ENCODE measurements at regions of chr16 and their contacts with region 1.

Region 1: GRCh38 chr16:88999457-89000206 is 22.6 kb upstream of the CBFA2T3 start:
- DNase-seq: no peak
- H3K4me3 ChIP-seq: no peak overlapping the region
- H3K4me3 Mint-ChIP-seq: no peak overlapping the region
- H3K27ac ChIP-seq: no peak overlapping the region
- H3K27ac Mint-ChIP-seq: peak overlapping the region in 1 of 7 donors; percentile 73
- H3K4me1 ChIP-seq: peaks cover 3 to 5% of the 10 kb centered on the region in 2 donors
- H3K4me1 Mint-ChIP-seq: peaks cover 17% of the 10 kb centered on the region
- H3K27me3 ChIP-seq: peaks cover 9 to 21% of the 10 kb centered on the region in 2 donors
- H3K27me3 Mint-ChIP-seq: peaks cover 19 to 40% (median 30%) of the 10 kb centered on the region in 3 donors
- CTCF ChIP-seq: no peak

Region 2: GRCh38 chr16:88303890-88304819 is 695.5 kb before region 1 on chr16:
- intact Hi-C with region 1: no loop called
- DNase-seq: no peak
- H3K4me3 ChIP-seq: no peak overlapping the region
- H3K4me3 Mint-ChIP-seq: no peak overlapping the region
- H3K27ac ChIP-seq: no peak overlapping the region
- H3K27ac Mint-ChIP-seq: no peak overlapping the region
- H3K4me1 ChIP-seq: no peaks in the 10 kb centered on the region
- H3K4me1 Mint-ChIP-seq: no peaks in the 10 kb centered on the region
- H3K27me3 ChIP-seq: no peaks in the 10 kb centered on the region
- H3K27me3 Mint-ChIP-seq: peaks cover 13 to 19% (median 15%) of the 10 kb centered on the region in 3 donors
- CTCF ChIP-seq: no peak

Region 3: DNA sequence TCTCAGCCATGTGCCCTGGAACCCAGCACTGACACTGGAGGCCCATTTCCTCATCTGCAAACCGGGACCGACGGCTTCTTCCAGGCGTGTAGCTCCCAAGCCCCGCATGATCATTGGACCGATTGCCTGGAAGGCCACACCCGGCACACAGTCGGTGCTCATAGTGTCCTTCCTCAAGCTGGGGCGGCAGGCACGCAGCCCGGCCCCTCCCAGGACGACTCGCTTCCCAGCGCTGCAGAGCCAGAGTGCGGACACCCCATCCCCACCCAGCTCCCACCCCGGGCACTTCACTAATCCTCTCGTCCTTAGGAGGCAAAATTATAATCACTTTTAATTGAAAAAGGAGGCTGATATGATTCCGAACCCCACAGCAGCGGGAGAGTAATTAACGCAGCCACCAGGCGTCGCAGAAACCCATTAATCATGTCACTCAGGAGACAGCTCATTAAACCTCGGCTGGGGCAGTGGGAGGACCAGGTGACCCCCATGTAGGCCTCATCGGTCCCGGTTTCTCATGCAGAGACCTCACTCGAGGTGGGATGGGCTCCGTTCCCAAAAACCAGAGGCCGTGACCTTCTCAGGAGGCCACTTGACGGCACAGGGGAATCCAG is 583.8 kb before region 1 on chr16:
- intact Hi-C with region 1: loop called in 1 of 2 experiments (anchors 5 kb)
- DNase-seq: no peak
- H3K4me3 ChIP-seq: no peak overlapping the region
- H3K4me3 Mint-ChIP-seq: no peak overlapping the region
- H3K27ac ChIP-seq: no peak overlapping the region
- H3K27ac Mint-ChIP-seq: peak overlapping the region in 2 of 7 donors; percentile 6 to 11
- H3K4me1 ChIP-seq: no peaks in the 10 kb centered on the region
- H3K4me1 Mint-ChIP-seq: no peaks in the 10 kb centered on the region
- H3K27me3 ChIP-seq: no peaks in the 10 kb centered on the region
- H3K27me3 Mint-ChIP-seq: peaks cover 0 to 6% (median 3%) of the 10 kb centered on the region in 3 donors
- CTCF ChIP-seq: no peak

Region 4: GRCh38 chr16:88983771-88984687 is 15.6 kb before region 1 on chr16:
- intact Hi-C with region 1: no loop called
- DNase-seq: no peak
- H3K4me3 ChIP-seq: no peak overlapping the region
- H3K4me3 Mint-ChIP-seq: peak overlapping the region in 1 of 2 donors; percentile 70
- H3K27ac ChIP-seq: no peak overlapping the region
- H3K27ac Mint-ChIP-seq: no peak overlapping the region
- H3K4me1 ChIP-seq: peaks cover 7 to 12% of the 10 kb centered on the region in 2 donors
- H3K4me1 Mint-ChIP-seq: peaks cover 24% of the 10 kb centered on the region
- H3K27me3 ChIP-seq: peaks cover 0 to 15% of the 10 kb centered on the region in 2 donors
- H3K27me3 Mint-ChIP-seq: peaks cover 26 to 50% (median 28%) of the 10 kb centered on the region in 3 donors
- CTCF ChIP-seq: no peak